Spleen (tissue), 13 donors: ENCODE measurements at regions of chr4 and their contacts with region 1.

Region 1: DNA sequence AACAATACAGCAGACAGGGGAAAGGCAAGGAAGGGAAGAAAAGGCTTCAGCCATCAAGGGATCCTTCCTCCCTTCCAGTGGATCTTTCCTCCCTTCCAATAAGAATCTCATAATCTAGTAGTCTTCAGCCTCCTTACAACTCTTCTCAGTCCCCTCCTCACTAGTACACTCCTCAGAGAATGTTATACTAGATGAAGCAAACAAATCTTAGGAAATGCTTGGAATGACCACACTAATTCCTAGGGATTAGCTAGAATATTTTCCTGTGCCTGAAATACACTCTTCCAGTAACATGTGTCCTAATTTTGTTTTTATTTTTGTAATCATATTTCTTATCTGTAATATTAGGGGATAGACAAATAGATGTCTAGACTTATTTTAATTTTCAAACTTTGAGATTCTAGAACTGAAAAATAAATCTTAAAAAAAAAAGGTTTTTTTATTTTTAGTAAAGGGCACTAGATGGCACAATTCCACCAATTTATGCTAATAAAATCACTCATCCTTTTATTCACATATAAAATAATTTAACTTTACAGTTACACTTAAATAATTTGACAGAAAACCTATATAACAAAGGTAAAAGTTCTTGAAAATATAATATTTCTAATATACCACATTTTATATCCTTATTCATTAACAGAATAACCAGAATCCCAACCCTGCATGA is 7.0 kb upstream of the STPG2 start:
- DNase-seq: no peak
- H3K4me3 ChIP-seq: no peak overlapping the region
- H3K27ac ChIP-seq: no peak overlapping the region
- H3K4me1 ChIP-seq: peaks cover 6 to 39% (median 20%) of the 10 kb centered on the region in 6 donors
- H3K27me3 ChIP-seq: no peaks in the 10 kb centered on the region
- CTCF ChIP-seq: peak in 5 of 11 experiments; percentile 8 to 32 (median 18)
- POLR2A ChIP-seq: no peak

Region 2: DNA sequence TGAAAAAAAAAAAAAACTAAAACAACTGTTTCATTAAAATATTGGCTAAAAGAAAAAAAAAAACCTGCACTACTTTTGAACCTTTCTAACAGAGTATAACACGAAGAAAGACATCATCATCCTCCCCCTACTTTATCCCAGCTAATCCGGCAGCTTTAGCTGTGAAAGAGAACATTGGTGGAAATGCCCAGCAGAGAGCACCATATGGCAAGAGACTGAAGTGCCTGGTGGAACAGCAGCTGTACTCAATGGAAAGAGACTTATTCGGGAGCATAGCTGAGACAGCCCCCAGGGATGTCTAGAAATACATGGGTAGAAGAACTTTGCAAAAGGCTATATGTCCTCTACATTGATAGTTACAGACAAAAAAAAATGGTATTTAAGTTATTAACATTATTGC is 37.2 kb before region 1 on chr4:
- intact Hi-C with region 1: no loop called
- DNase-seq: no peak
- H3K4me3 ChIP-seq: no peak overlapping the region
- H3K27ac ChIP-seq: no peak overlapping the region
- H3K4me1 ChIP-seq: no peaks in the 10 kb centered on the region
- H3K27me3 ChIP-seq: no peaks in the 10 kb centered on the region
- CTCF ChIP-seq: peak in 4 of 11 experiments; percentile 11 to 34 (median 20)
- POLR2A ChIP-seq: no peak

Region 3: DNA sequence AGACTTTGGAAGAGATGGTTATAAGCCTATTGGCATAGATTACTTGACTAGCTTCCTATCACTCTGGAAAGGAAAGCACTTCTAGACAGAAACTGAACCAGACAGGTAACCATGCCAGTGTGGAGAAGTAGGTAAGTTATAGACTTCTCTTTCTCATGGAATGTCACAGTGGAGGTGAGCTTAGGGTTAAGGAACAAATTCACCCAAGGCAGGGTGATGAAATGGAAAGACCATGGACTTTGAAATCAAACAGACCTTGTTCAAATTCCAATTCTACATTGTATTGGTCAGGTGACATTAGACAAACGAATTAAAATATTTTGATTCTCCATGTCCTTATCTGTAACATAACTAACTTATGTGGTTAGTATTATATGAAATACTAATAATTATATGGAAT is 103.3 kb after region 1 on chr4:
- intact Hi-C with region 1: loop called (anchors 10 kb)
- DNase-seq: no peak
- H3K4me3 ChIP-seq: no peak overlapping the region
- H3K27ac ChIP-seq: no peak overlapping the region
- H3K4me1 ChIP-seq: no peaks in the 10 kb centered on the region
- H3K27me3 ChIP-seq: no peaks in the 10 kb centered on the region
- CTCF ChIP-seq: no peak
- POLR2A ChIP-seq: no peak